ENCODE measurements at regions of chr12 and their contacts with region 1.

Region 1: DNA sequence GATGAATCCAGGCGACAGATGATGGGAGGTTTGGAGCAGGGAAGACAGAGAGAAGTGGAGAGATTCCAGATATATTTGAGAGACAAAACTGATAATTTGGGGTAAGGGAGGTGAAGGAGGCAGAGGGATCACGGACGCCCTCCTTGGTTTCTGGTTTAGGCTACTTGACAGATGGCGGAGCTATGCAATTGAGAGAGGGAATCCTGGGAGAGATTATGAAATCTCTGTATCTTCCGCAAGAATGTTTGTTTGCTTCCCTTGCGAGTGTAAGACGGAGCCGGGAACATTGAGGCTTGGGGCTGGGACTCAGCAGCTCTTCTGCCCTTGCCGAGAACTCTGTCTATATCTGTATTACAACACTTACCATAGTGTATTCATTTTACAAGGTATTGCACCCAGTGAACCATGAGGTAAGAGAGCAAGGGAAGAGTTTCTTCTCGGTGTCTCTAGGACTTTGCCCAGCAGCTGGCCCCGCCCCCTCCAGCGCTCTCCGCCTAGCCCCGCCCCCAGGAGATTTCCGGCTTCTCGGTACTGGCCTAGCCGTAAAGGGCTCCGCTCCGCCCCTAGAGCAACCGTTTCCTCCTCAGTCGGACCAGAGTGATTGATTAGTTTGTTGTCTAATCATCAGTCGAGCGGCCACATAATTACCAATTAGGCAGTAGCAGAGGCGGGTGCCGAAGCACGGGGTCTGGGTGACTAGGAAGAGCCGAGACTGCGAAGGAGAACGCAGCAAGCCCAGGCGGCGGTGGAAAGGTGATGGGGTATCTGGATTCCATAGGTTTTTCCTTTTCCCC is at the start of gene PRR13:
- DNase-seq: peak; percentile 90 to 99 (median 97)
- ATAC-seq: peak; percentile 98
- H3K4me3 Mint-ChIP-seq: peak within 1 kb of the TSS; percentile 90 to 100 (median 96)
- H3K27ac Mint-ChIP-seq: peak within 1 kb of the TSS; percentile 90 to 99 (median 96)
- H3K4me1 Mint-ChIP-seq: peaks cover 17 to 48% (median 44%) of the 10 kb centered on the region in 4 donors
- H3K27me3 Mint-ChIP-seq: no peaks in the 10 kb centered on the region
- polyA plus RNA-seq, gene PRR13: 513 to 535 (median 534) TPM

Region 2: GRCh38 chr12:53321074-53321814 is 120.0 kb before region 1 on chr12 and contains the start of gene AAAS:
- POLR2A ChIA-PET with region 1: interaction called, 19 read pairs
- DNase-seq: peak; percentile 87 to 99 (median 92)
- ATAC-seq: peak; percentile 77 to 78
- H3K4me3 Mint-ChIP-seq: peak within 1 kb of the TSS; percentile 90 to 100 (median 98)
- H3K27ac Mint-ChIP-seq: peak within 1 kb of the TSS; percentile 96 to 99 (median 97)
- H3K4me1 Mint-ChIP-seq: peaks cover 28 to 51% (median 45%) of the 10 kb centered on the region in 4 donors
- H3K27me3 Mint-ChIP-seq: no peaks in the 10 kb centered on the region
- polyA plus RNA-seq, gene AAAS: 34.1 to 57.2 (median 39.3) TPM

Region 3: DNA sequence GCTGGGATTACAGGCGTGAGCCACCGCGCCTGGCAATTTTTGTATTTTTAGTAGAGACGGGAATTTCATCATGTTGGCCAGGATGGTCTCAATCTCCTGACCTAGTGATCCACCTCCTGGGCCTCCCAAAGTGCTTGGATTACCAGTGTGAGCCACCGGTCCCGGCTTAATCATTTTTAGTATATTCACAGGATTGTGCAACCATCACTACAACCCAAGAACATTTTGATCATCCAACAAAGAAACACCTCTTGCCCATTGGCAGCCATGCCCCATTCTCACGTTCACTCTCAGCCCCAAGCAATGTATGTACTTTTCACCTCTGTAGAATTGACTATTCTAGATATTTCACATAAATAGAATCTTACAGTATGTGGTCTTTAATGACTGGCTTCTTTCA is 41.3 kb before region 1 on chr12:
- POLR2A ChIA-PET with region 1: no interaction called
- DNase-seq: no peak
- ATAC-seq: no peak
- H3K4me3 Mint-ChIP-seq: no peak overlapping the region
- H3K27ac Mint-ChIP-seq: peak overlapping the region in 1 of 10 donors; percentile 1
- H3K4me1 Mint-ChIP-seq: peaks cover 2 to 33% (median 15%) of the 10 kb centered on the region in 4 donors
- H3K27me3 Mint-ChIP-seq: no peaks in the 10 kb centered on the region

Region 4: GRCh38 chr12:53451661-53452158 is 10.5 kb after region 1 on chr12 and contains the start of gene PCBP2:
- POLR2A ChIA-PET with region 1: interaction called, 15 read pairs
- DNase-seq: peak; percentile 92 to 99 (median 96)
- ATAC-seq: peak; percentile 95 to 96
- H3K4me3 Mint-ChIP-seq: peak within 1 kb of the TSS; percentile 90 to 100 (median 99)
- H3K27ac Mint-ChIP-seq: peak within 1 kb of the TSS; percentile 89 to 100 (median 100)
- H3K4me1 Mint-ChIP-seq: peaks cover 19 to 45% (median 38%) of the 10 kb centered on the region in 4 donors
- H3K27me3 Mint-ChIP-seq: peaks cover 0 to 1% (median 0%) of the 10 kb centered on the region in 5 donors
- polyA plus RNA-seq, gene PCBP2: 143 to 157 (median 152) TPM

Measured in naive thymus-derived CD8-positive, alpha-beta T cell (primary cell).